A673 (cell line): ENCODE measurements at regions of chr3 and their contacts with region 1.

Region 1: DNA sequence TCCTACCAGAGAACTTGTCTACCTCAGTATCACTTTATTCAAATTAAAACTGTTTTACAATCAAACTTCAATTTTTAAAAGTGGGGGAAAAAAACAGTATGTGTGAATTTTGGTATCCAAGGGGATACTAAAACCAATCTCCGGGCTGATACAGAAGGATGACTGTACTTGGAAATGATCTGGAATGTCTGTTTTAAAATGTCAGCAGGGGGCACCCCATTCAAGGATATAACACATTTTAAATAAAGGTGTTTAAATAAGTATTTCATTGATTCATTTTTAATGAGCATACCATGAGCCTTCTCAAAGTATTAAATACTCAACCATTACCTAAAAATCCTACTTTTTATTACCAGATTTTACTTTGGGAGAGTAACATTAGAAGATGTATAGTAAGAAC is 67.9 kb downstream of the ULK4 start:
- DNase-seq: peak; percentile 44
- H3K4me3 ChIP-seq: no peak overlapping the region
- H3K27ac ChIP-seq: no peak overlapping the region
- H3K4me1 ChIP-seq: no peaks in the 10 kb centered on the region
- H3K27me3 ChIP-seq: no peaks in the 10 kb centered on the region
- CTCF ChIP-seq: peak; percentile 49

Region 2: GRCh38 chr3:41405466-41405865 is 488.5 kb before region 1 on chr3:
- CTCF ChIA-PET with region 1: no interaction called
- POLR2A ChIA-PET with region 1: no interaction called
- intact Hi-C with region 1: no loop called
- DNase-seq: no peak
- H3K4me3 ChIP-seq: no peak overlapping the region
- H3K27ac ChIP-seq: no peak overlapping the region
- H3K4me1 ChIP-seq: no peaks in the 10 kb centered on the region
- H3K27me3 ChIP-seq: no peaks in the 10 kb centered on the region
- CTCF ChIP-seq: no peak

Region 3: GRCh38 chr3:42099011-42099765 is 205.2 kb after region 1 on chr3:
- CTCF ChIA-PET with region 1: no interaction called
- POLR2A ChIA-PET with region 1: no interaction called
- intact Hi-C with region 1: loop called (anchors 1 kb)
- DNase-seq: no peak
- H3K4me3 ChIP-seq: no peak overlapping the region
- H3K27ac ChIP-seq: no peak overlapping the region
- H3K4me1 ChIP-seq: peaks cover 8% of the 10 kb centered on the region
- H3K27me3 ChIP-seq: no peaks in the 10 kb centered on the region
- CTCF ChIP-seq: no peak

Region 4: GRCh38 chr3:42190701-42191462 is 296.9 kb after region 1 on chr3:
- CTCF ChIA-PET with region 1: no interaction called
- POLR2A ChIA-PET with region 1: no interaction called
- intact Hi-C with region 1: loop called (anchors 1 kb)
- DNase-seq: peak; percentile 59
- H3K4me3 ChIP-seq: no peak overlapping the region
- H3K27ac ChIP-seq: no peak overlapping the region
- H3K4me1 ChIP-seq: no peaks in the 10 kb centered on the region
- H3K27me3 ChIP-seq: no peaks in the 10 kb centered on the region
- CTCF ChIP-seq: peak; percentile 71